ENCODE measurements at regions of chr4 and their contacts with region 1.

Region 1: DNA sequence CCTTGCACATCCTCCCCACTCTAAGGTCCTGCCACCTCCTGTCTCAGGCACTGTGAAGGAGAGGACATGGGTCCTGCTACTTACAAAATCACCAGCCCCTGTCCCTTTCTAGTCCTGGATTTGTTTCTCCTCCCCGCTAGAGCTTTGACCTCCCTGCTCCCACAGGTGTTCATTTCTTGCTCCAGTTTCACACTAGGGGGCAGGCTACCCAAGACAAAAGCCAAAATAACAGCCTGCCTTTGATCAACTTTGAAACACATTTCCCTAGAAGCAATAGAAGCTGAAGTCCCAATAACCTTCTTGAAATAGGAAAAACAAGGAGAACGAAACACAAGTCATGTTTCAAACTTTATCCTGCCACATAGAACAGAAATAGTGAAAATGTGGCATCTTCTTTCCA is 164.4 kb downstream of the QDPR start:
- DNase-seq: peak; percentile 58
- ATAC-seq: peak; percentile 61
- H3K4me3 Mint-ChIP-seq: no peak overlapping the region
- H3K27ac Mint-ChIP-seq: no peak overlapping the region
- H3K4me1 Mint-ChIP-seq: no peaks in the 10 kb centered on the region
- H3K27me3 Mint-ChIP-seq: no peaks in the 10 kb centered on the region
- CTCF ChIP-seq: peak; percentile 49

Region 2: GRCh38 chr4:17336524-17336961 is 10.9 kb before region 1 on chr4:
- CTCF ChIA-PET with region 1: interaction called, 12 read pairs
- POLR2A ChIA-PET with region 1: interaction called, 3 read pairs
- intact Hi-C with region 1: no loop called
- DNase-seq: peak; percentile 88
- ATAC-seq: peak; percentile 93
- H3K4me3 Mint-ChIP-seq: peak overlapping the region; percentile 41
- H3K27ac Mint-ChIP-seq: peak overlapping the region; percentile 94
- H3K4me1 Mint-ChIP-seq: peaks cover 43% of the 10 kb centered on the region
- H3K27me3 Mint-ChIP-seq: no peaks in the 10 kb centered on the region
- CTCF ChIP-seq: no peak

Region 3: DNA sequence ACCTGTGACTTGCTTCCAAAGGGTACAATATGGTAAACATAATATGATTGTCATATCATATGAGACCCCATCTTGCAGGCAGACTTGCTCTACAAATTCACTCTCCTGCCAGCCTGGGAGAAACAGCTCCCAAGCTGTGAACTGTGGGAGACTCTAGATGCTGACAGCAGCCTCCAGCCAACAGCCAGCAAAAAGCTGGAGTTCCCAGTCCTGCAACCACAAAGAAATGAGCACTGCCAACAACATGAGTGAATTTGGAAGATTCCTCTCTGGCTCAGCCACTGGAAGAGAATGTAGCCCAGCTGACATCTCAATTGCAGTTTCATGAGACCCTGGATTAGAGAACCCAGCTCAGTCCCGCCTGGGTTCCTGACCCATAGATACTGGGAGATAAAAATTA is 19.1 kb after region 1 on chr4:
- CTCF ChIA-PET with region 1: interaction called, 10 read pairs
- POLR2A ChIA-PET with region 1: no interaction called
- intact Hi-C with region 1: no loop called
- DNase-seq: no peak
- ATAC-seq: no peak
- H3K4me3 Mint-ChIP-seq: no peak overlapping the region
- H3K27ac Mint-ChIP-seq: no peak overlapping the region
- H3K4me1 Mint-ChIP-seq: peaks cover 3% of the 10 kb centered on the region
- H3K27me3 Mint-ChIP-seq: peaks cover 5% of the 10 kb centered on the region
- CTCF ChIP-seq: no peak

Region 4: DNA sequence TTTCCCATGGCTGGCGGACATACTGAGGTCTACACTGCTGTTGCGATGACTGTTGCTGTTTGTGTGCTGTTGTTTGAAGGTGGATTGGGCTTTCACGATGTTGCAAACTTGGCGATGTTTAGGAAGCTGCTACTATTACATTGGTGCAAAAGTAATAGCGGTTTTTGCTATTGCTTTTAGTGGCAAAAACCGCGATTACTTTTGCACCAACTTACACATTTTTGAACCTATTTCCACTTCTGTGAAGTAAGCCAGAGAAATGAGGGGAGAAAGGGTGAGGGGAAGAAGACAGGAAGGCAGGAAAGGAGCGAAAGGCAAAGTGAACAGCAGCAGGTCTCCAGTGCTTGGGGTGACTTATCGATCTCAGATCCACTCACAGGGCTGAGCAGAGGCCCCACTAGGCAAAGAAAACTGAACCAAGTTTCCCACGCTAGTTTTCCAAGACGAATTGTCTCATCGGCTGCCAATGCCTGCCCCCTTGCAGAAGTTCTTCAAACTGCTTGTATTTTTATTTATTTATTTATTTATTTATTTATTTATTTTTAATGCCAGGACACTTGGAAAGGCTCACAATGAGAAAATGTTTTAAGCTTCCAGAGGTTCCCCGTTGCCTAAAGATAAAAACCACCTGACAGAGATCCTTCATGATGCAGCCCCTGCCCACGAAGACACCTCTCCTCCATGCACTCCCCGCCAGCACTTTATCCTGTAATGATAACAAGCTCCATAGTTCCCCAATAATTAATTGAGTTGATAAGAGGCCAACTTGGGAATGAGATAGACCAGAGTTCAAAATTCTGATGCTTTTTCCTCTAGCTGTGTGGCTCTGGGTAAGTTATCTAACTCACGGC is 121.2 kb after region 1 on chr4:
- CTCF ChIA-PET with region 1: interaction called, 28 read pairs
- POLR2A ChIA-PET with region 1: no interaction called
- intact Hi-C with region 1: no loop called
- DNase-seq: no peak
- ATAC-seq: no peak
- H3K4me3 Mint-ChIP-seq: no peak overlapping the region
- H3K27ac Mint-ChIP-seq: no peak overlapping the region
- H3K4me1 Mint-ChIP-seq: peaks cover 2% of the 10 kb centered on the region
- H3K27me3 Mint-ChIP-seq: no peaks in the 10 kb centered on the region
- CTCF ChIP-seq: no peak